Activated T-helper 1 cell treated with anti-CD3 and anti-CD28 coated beads, Interleukin-12 subunit alpha, Interleukin-12 subunit beta, Interleukin-2, Interleukin-4 antibody, amounts not matched to agents 30 ng/mL and 10 ng/mL and 1 ng/mL, durations not matched to agents 14 hours and 24 hours and 36 hours (primary cell): ENCODE measurements at regions of chr7 and their contacts with region 1.

Region 1: DNA sequence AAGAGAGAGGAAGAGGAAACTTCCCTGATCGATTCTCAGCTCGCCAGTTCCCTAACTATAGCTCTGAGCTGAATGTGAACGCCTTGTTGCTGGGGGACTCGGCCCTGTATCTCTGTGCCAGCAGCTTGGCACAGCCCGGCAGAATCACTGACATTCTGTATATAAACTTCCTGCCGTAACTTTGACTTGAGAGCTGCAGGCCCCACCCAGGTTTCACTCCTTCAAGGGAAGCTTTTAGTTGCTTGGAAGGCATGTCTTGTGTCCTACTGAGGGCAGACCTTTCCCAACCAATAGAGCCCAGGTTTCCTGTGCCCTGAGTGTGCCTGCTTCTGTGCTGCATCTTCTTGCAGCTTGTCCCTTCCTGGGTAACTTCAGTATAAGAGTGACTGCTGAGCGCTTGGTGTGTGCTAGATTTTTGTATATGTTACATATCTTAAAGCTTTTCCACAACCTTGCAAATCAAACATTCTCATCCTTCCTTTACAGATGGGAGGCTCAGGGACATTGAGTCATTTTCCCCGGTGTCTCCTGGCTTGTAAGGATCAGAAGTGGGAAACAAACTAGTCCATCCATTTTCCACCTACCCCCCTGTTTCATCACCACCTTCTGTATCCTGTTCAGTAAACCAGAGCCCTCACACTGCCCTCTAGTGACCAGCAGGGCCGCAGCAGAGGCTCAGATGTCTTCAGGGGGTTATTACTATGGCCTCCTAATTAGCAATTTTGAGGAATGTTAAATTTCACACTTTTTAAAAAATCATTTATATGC is 225.2 kb upstream of the PRSS58 start:
- DNase-seq: peak; percentile 28
- H3K4me3 Mint-ChIP-seq: peak overlapping the region; percentile 50
- H3K27ac Mint-ChIP-seq: peak overlapping the region; percentile 78
- H3K4me1 Mint-ChIP-seq: peaks cover 29% of the 10 kb centered on the region
- H3K27me3 Mint-ChIP-seq: peaks cover 3% of the 10 kb centered on the region

Region 2: GRCh38 chr7:142338633-142339501 is 144.2 kb before region 1 on chr7:
- intact Hi-C with region 1: no loop called
- DNase-seq: no peak
- H3K4me3 Mint-ChIP-seq: no peak overlapping the region
- H3K27ac Mint-ChIP-seq: peak overlapping the region; percentile 5
- H3K4me1 Mint-ChIP-seq: peaks cover 5% of the 10 kb centered on the region
- H3K27me3 Mint-ChIP-seq: peaks cover 8% of the 10 kb centered on the region

Region 3: GRCh38 chr7:142412551-142413193 is 70.4 kb before region 1 on chr7:
- intact Hi-C with region 1: loop called (anchors 2 kb)
- DNase-seq: peak; percentile 13
- H3K4me3 Mint-ChIP-seq: no peak overlapping the region
- H3K27ac Mint-ChIP-seq: no peak overlapping the region
- H3K4me1 Mint-ChIP-seq: peaks cover 4% of the 10 kb centered on the region
- H3K27me3 Mint-ChIP-seq: peaks cover 5% of the 10 kb centered on the region